Gastrocnemius medialis (tissue), 4 donors: ENCODE measurements at regions of chr20 and their contacts with region 1.

Region 1: DNA sequence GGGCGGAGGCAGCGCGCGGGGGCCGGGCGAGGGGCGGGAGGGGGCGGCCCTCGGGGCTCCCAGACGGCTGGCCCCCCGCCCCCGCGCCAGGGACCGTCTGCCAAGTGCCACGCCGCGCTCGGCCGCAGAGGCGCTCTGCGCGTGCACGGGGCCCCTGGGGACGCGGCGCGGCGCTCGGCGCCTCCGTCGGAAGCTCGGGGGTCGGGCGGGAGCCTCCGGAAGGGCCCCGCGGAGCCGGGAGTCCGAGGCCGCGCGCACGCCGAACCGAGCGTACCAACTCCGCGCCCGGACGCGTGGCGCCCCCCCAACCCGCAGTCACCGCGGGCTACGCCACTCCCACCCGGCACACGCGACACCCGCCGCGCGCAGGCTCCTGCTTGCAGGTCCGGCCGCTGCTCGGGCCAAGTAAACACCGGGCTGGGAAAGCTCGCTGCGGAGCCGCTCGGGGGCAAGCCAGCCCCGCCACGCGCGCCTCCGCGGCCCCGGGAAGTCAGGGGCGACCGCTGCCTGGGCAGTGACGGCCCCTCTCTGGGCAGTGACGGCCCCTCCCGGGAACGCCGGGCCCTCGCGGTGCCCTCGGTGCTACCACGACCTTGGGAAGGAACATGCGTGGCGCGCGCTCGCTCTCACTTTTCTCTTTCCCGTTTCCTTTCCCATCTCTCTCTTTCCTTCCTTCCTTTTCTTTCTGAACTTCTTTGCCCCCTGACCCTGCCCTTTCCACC is 384 bp upstream of the PREX1 start:
- DNase-seq: peak; percentile 63 to 70
- ATAC-seq: peak; percentile 64 to 72
- H3K4me3 ChIP-seq: peak overlapping the region; percentile 57 to 71 (median 62)
- H3K27ac ChIP-seq: peak overlapping the region; percentile 83 to 94 (median 88)
- H3K4me1 ChIP-seq: peaks cover 9 to 30% of the 10 kb centered on the region in 2 donors
- H3K27me3 ChIP-seq: no peaks in the 10 kb centered on the region
- CTCF ChIP-seq: peak in 4 of 5 experiments; percentile 27 to 53 (median 50)
- POLR2A ChIP-seq: peak; percentile 75 to 88

Region 2: DNA sequence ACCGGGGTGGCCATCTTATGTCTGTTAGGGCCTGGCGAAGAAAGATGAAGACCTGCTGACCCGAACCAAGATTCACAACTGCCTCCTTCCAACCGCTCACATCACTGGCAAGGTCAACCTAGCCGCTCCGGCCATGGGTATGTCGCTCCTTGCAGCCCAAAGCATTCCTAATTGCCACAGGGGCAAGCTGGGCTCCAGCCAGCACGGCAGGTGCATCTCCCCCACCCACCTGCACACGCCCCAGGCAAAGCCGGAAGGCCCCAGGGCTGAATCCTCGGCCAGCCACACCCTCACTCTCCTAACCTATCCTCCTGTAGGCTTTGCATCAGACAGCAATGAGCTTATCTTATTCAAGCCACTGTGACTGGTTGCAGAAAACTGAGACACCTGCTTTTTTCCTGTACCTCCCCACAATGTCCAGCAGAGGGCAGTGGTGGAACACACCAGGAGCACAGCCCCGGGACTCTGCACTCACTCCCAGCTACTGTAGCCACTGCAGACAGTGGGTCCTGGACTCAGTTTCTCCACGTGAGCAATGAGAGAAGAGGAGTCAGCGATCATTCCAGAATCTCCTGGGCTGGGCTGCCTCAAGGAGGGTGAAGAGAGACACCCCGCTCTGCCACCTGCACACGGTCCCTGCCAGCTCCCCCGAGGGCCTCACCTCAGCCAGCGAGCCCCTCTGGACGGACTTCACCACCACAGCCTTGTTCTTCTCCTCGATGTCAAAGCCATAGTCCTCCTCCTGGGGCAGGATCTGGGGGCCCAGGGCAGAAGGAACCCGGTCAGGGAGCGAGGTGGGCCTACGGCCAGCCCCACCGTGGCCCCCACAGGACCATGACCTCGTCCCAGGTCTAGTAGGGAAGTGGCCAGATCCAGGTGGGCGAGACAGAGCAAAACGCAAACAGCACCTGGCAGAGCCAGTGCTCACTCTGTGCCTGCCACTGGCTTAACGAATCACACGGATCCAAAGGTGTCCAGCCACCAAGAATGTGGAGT is 170.4 kb before region 1 on chr20:
- in situ Hi-C with region 1: no loop called
- intact Hi-C with region 1: loop called (anchors 5 kb)
- DNase-seq: peak; percentile 54 to 63
- ATAC-seq: peak; percentile 76 to 85
- H3K4me3 ChIP-seq: no peak overlapping the region
- H3K27ac ChIP-seq: no peak overlapping the region
- H3K4me1 ChIP-seq: no peaks in the 10 kb centered on the region
- H3K27me3 ChIP-seq: no peaks in the 10 kb centered on the region
- CTCF ChIP-seq: peak; percentile 84 to 96 (median 93)
- POLR2A ChIP-seq: no peak

Region 3: DNA sequence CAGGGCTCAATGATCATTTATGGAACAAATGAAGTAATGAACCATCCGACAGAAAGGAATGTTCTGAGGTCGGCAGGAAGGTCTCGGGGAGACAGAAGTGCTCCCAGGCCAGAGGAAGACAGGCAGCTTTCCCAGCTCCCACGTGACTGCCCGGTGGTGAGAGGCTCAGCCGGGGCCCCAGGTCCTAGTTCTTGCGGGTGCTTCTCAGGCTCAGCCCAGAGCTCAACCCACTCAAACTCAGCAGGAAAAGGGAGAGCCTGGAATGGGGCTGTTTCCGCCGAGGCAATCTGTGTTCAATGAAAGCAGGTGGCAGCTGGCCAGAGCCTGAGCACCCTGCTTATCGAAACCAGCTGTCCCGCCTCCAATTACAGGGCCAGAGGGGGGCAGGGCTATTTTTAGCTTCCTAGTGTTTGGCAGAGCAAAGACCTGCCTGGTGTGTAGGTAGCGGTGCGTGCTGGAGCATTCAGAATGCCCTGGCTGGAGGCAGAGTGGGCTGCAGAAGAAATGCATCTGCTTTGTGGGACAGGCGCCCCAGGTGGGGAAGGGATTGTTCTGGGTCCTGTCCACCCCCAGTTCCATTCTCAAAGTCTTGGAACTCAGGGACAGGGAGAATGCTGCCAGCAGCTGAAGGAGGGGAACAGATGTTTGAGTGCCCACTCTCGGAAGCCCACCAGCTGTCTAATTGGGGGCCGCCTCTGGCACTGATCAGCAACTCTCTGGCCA is 145.5 kb before region 1 on chr20:
- in situ Hi-C with region 1: no loop called
- intact Hi-C with region 1: loop called (anchors 10 kb)
- DNase-seq: peak; percentile 29 to 67
- ATAC-seq: peak; percentile 66 to 86
- H3K4me3 ChIP-seq: peak overlapping the region; percentile 30 to 42 (median 36)
- H3K27ac ChIP-seq: peak overlapping the region; percentile 52 to 78 (median 73)
- H3K4me1 ChIP-seq: peaks cover 57 to 58% of the 10 kb centered on the region in 2 donors
- H3K27me3 ChIP-seq: no peaks in the 10 kb centered on the region
- CTCF ChIP-seq: no peak
- POLR2A ChIP-seq: no peak

Region 4: DNA sequence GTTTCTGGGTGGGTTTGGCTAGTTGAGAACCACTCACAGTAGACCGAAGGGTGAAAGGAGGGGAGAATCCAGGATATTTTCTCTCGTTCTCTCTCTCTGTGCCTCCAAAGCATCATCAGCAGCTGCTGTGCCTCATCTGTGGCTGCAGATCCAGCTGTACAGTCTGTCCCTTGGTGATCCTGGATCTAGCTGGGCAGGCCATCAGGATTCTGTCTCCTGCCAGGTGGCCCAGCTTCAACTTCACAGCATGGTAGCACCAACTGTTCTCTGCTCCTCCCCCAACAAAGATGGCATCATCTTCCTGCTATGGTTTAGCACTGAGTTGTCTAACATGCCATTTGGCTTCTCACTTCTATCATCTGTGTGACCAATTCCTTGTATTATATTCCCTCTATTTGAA is 64.7 kb after region 1 on chr20:
- in situ Hi-C with region 1: no loop called
- intact Hi-C with region 1: loop called (anchors 2 kb)
- DNase-seq: peak; percentile 75 to 91
- ATAC-seq: peak; percentile 87 to 90
- H3K4me3 ChIP-seq: no peak overlapping the region
- H3K27ac ChIP-seq: peak overlapping the region; percentile 68 to 87 (median 80)
- H3K4me1 ChIP-seq: peaks cover 4 to 16% of the 10 kb centered on the region in 2 donors
- H3K27me3 ChIP-seq: no peaks in the 10 kb centered on the region
- CTCF ChIP-seq: no peak
- POLR2A ChIP-seq: no peak